MCF 10A (cell line): ENCODE measurements at regions of chr20 and their contacts with region 1.

Region 1: GRCh38 chr20:33791959-33792597 is 19.1 kb upstream of the CHMP4B start:
- DNase-seq: peak; percentile 48
- H3K4me3 Mint-ChIP-seq: no peak overlapping the region
- H3K27ac Mint-ChIP-seq: no peak overlapping the region
- H3K4me1 Mint-ChIP-seq: peaks cover 24% of the 10 kb centered on the region
- H3K27me3 Mint-ChIP-seq: no peaks in the 10 kb centered on the region
- CTCF ChIP-seq: peak; percentile 87

Region 2: DNA sequence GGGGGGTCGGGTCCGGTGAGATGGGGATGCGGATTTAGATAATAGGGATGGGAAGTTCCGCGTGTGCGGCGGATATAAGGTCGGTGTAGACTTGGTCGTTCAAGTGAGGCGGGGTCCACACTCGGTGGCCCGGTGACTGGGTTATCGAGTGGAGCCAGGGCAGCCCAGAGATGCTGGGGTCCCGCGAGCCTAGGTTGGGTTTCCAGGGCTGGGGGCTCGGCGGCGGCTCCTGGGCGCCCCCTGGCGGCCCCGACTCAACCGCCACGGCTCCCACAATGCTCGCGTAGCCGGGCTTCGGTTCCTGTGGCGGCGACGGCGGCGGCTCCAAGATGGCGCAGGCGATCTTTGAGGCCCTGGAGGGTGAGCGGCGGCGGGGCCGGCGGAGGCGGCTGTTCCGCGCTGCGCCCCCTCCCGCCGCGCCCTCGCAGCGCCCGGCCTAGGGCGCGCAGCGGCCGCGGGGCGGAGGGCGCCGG is 60.3 kb before region 1 on chr20 and contains the start of gene ZNF341:
- CTCF ChIA-PET with region 1: interaction called, 8 read pairs
- POLR2A ChIA-PET with region 1: interaction called, 19 read pairs
- intact Hi-C with region 1: loop called (anchors 5 kb)
- DNase-seq: peak; percentile 79
- H3K4me3 Mint-ChIP-seq: peak within 1 kb of the TSS; percentile 86
- H3K27ac Mint-ChIP-seq: peak within 1 kb of the TSS; percentile 91
- H3K4me1 Mint-ChIP-seq: peaks cover 20% of the 10 kb centered on the region
- H3K27me3 Mint-ChIP-seq: no peaks in the 10 kb centered on the region
- CTCF ChIP-seq: peak; percentile 82
- total RNA-seq, gene ZNF341: 2.0 and 2.5 TPM in 2 replicates

Region 3: GRCh38 chr20:33803921-33804337 is 11.9 kb after region 1 on chr20:
- CTCF ChIA-PET with region 1: interaction called, 15 read pairs
- POLR2A ChIA-PET with region 1: interaction called, 17 read pairs
- intact Hi-C with region 1: no loop called
- DNase-seq: peak; percentile 40
- H3K4me3 Mint-ChIP-seq: no peak overlapping the region
- H3K27ac Mint-ChIP-seq: no peak overlapping the region
- H3K4me1 Mint-ChIP-seq: no peaks in the 10 kb centered on the region
- H3K27me3 Mint-ChIP-seq: no peaks in the 10 kb centered on the region
- CTCF ChIP-seq: no peak

Region 4: GRCh38 chr20:33821270-33821836 is 29.3 kb after region 1 on chr20:
- CTCF ChIA-PET with region 1: interaction called, 16 read pairs
- POLR2A ChIA-PET with region 1: interaction called, 4 read pairs
- intact Hi-C with region 1: no loop called
- DNase-seq: no peak
- H3K4me3 Mint-ChIP-seq: no peak overlapping the region
- H3K27ac Mint-ChIP-seq: no peak overlapping the region
- H3K4me1 Mint-ChIP-seq: peaks cover 21% of the 10 kb centered on the region
- H3K27me3 Mint-ChIP-seq: no peaks in the 10 kb centered on the region
- CTCF ChIP-seq: no peak